Activated CD4-positive, alpha-beta memory T cell treated with anti-CD3 and anti-CD28 coated beads for 36 hours (primary cell): ENCODE measurements at regions of chr17 and their contacts with region 1.

Region 1: GRCh38 chr17:1716076-1716995 is 6.2 kb upstream of the TLCD2 start:
- DNase-seq: peak; percentile 100
- H3K4me3 Mint-ChIP-seq: peak overlapping the region; percentile 94
- H3K27ac Mint-ChIP-seq: peak overlapping the region; percentile 99
- H3K4me1 Mint-ChIP-seq: peaks cover 18% of the 10 kb centered on the region
- H3K27me3 Mint-ChIP-seq: no peaks in the 10 kb centered on the region

Region 2: GRCh38 chr17:1561400-1562175 is 154.7 kb before region 1 on chr17:
- CTCF ChIA-PET with region 1: interaction called, 3 read pairs
- POLR2A ChIA-PET with region 1: no interaction called
- intact Hi-C with region 1: loop called (anchors 5 kb)
- DNase-seq: peak; percentile 53
- H3K4me3 Mint-ChIP-seq: peak overlapping the region; percentile 82
- H3K27ac Mint-ChIP-seq: peak overlapping the region; percentile 49
- H3K4me1 Mint-ChIP-seq: peaks cover 38% of the 10 kb centered on the region
- H3K27me3 Mint-ChIP-seq: no peaks in the 10 kb centered on the region

Region 3: GRCh38 chr17:1673041-1673785 is 43.1 kb before region 1 on chr17:
- CTCF ChIA-PET with region 1: interaction called, 13 read pairs
- POLR2A ChIA-PET with region 1: interaction called, 4 read pairs
- intact Hi-C with region 1: no loop called
- DNase-seq: peak; percentile 43
- H3K4me3 Mint-ChIP-seq: no peak overlapping the region
- H3K27ac Mint-ChIP-seq: peak overlapping the region; percentile 29
- H3K4me1 Mint-ChIP-seq: peaks cover 19% of the 10 kb centered on the region
- H3K27me3 Mint-ChIP-seq: no peaks in the 10 kb centered on the region

Region 4: DNA sequence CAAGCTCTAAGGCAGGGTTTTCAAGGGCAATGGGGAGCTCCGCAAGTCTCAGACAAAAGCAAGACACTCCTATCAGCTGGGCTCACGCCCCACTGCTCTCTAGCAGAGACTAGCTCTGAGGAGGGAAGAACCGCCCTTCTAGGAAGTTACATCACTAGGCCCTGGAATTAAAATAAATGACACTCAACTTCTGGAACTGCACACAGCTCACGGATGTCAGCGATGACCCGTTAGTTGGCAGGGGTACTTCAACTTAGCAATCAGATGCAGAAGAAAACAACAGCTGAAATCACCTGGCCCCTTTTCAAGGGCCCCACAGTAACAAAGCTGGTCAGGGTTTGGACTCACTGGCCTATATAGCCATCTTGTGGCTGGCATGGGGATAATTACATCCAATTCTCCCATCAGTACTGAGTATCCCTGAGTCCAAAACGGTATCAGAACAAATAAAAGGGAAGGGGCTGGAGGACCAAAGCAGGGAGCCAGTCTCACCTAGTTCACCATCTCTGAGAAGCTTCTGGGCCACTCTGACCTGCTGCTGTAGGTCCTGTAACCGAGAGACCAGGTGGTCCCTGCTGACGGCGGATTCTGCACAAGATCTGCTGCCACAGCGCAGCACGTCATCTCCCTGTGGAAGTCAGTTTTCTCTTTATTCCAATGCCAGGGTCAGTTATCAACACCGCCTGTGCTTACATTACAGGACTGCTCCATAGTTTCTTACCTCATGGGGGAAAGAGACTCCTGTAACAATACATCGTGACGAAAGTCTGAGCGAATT is 67.7 kb after region 1 on chr17:
- CTCF ChIA-PET with region 1: interaction called, 17 read pairs
- POLR2A ChIA-PET with region 1: no interaction called
- intact Hi-C with region 1: no loop called
- DNase-seq: no peak
- H3K4me3 Mint-ChIP-seq: no peak overlapping the region
- H3K27ac Mint-ChIP-seq: no peak overlapping the region
- H3K4me1 Mint-ChIP-seq: no peaks in the 10 kb centered on the region
- H3K27me3 Mint-ChIP-seq: no peaks in the 10 kb centered on the region

Region 5: DNA sequence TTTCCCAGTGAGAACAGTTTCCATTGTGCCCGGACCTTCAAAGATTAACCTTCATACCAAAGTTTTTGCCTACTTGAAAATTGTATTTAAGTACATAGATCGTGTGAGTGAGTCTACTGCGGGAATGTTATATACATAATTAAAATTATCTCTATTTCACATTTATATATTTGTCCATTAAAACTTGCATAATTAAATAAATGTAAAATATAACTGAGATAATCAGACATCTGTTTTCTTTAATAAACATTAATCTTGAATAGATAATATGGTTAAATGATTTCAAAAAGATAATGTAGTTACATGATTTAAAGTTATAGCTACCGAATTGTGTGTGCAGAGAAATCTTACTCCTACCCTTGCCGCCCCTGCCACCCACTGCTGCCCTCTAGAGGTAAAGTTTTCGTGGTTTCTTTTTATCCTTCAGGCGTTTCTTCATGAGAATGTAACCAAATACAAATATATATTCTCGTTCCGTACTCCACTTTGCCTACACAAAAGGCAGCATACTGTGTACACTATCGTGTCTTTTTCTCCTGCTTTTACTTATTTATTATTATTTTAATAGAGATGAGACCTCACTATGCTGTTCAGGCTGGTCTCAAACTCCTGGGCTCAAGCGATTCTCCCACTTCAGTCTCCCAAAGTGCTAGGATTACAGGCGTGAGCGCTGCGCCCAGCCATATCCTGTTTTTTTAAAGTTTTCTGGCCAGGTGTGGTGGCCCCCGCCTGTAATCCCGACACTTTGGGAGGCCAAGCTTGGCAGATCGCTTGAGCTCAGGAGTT is 149.1 kb after region 1 on chr17:
- CTCF ChIA-PET with region 1: interaction called, 25 read pairs
- POLR2A ChIA-PET with region 1: no interaction called
- intact Hi-C with region 1: loop called (anchors 2 kb)
- DNase-seq: peak; percentile 65
- H3K4me3 Mint-ChIP-seq: no peak overlapping the region
- H3K27ac Mint-ChIP-seq: no peak overlapping the region
- H3K4me1 Mint-ChIP-seq: peaks cover 15% of the 10 kb centered on the region
- H3K27me3 Mint-ChIP-seq: no peaks in the 10 kb centered on the region

Region 6: DNA sequence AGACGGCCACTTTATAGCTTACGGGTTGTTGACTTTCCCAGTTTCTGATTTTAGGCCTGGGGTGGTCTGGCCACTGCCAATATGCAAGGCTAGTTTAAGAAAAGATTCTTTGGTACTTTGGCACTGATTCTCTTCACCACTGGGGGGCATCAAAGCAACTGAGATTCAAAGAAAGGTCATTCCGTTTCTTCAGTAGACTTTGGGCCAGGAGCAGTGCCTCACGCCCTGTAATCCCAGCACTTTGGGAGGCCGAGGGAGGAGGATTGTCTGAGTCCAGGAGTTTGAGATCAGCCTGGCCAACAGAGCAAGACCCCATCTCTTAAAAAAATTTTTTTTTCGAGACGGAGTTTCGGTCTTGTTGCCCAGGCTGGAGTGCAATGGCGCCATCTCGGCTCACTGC is 166.5 kb after region 1 on chr17:
- CTCF ChIA-PET with region 1: interaction called, 10 read pairs
- POLR2A ChIA-PET with region 1: interaction called, 3 read pairs
- intact Hi-C with region 1: no loop called
- DNase-seq: peak; percentile 20
- H3K4me3 Mint-ChIP-seq: no peak overlapping the region
- H3K27ac Mint-ChIP-seq: no peak overlapping the region
- H3K4me1 Mint-ChIP-seq: no peaks in the 10 kb centered on the region
- H3K27me3 Mint-ChIP-seq: no peaks in the 10 kb centered on the region

Region 7: DNA sequence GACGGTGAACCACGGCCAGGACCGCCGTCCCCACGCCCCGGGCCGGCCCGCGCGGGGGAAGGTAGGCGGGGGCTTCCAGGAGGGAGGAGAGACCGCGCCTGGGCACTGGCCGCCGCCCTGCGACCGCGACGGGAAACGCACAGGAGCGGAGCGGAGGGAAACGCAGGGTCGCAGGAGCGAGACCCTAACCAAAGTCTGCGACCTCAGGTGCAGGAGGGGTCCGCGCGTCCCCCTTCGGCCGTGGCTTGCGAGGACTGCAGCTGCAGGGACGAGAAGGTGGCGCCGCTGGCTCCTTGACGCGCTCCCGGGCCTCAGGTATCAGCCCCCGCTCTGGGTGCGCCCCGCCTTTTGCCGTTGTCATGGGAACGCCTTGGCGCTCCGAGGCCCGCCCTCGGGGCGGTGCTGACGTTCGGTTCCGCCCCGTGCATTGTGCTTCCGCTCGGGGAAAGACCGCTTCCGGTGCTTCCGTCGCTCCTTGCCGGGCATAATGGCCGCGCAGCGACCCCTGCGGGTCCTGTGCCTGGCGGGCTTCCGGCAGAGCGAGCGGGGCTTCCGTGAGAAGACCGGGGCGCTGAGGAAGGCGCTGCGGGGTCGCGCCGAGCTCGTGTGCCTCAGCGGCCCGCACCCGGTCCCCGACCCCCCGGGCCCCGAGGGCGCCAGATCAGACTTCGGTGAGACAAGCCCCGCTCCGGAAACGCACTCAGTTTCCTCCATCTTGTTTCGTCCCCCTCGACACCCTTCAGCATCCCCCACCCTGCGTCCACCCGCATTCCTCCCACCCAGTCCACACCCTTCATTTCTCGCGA is 325.4 kb after region 1 on chr17 and contains the start of gene OVCA2:
- CTCF ChIA-PET with region 1: interaction called, 5 read pairs
- POLR2A ChIA-PET with region 1: no interaction called
- intact Hi-C with region 1: loop called (anchors 5 kb)
- DNase-seq: peak; percentile 98
- H3K4me3 Mint-ChIP-seq: peak within 1 kb of the TSS; percentile 96
- H3K27ac Mint-ChIP-seq: peak within 1 kb of the TSS; percentile 97
- H3K4me1 Mint-ChIP-seq: peaks cover 23% of the 10 kb centered on the region
- H3K27me3 Mint-ChIP-seq: no peaks in the 10 kb centered on the region
- total RNA-seq, gene OVCA2: 31.7 to 34.8 TPM